ENCODE measurements at regions of chr9 and their contacts with region 1.

Region 1: GRCh38 chr9:107489687-107490605 is at the start of gene KLF4:
- DNase-seq: peak; percentile 91
- H3K4me3 ChIP-seq: peak within 1 kb of the TSS; percentile 93 to 97 (median 94)
- H3K27ac ChIP-seq: peak within 1 kb of the TSS; percentile 83
- H3K4me1 ChIP-seq: peaks cover 39% of the 10 kb centered on the region
- H3K27me3 ChIP-seq: no peaks in the 10 kb centered on the region
- CTCF ChIP-seq: no peak
- total RNA-seq, gene KLF4: 20.5 to 52.5 TPM

Region 2: DNA sequence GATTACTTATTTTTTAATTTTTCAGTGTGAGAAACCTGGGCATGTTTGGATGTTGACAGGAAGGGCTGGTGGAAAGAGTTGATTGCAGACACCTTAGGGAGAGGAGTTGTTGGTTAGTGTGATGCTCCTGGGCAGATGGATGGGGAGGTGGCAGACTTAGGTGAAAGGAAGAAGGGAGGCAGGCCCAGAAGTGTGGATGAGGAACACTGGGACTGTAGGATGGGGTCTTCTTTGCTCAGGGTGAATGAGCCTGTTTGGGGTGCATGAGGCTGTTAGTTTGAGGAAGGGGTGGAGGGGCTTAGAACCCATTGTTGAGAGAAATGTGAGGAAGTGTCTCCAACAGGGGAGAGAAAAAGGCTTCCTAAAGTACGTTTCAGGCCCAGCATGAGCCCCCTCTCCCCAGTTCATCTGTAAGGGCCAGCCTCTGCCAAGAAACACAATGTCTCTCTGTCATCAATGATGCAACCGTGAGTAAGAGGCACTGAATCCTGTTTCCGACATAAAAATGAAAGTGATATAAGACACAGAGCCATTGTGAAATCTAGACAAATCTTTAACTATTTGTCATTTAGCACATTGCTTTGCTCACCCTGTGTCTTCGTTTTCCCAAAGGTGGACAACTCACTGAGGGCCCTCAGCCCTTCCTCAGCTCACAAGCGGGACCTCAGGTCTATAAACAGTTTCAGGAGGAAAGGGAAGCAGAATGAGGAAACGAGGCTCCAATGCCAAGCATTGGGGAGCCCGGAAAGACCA is 58.3 kb after region 1 on chr9:
- CTCF ChIA-PET with region 1: no interaction called
- dilution Hi-C with region 1: no loop called
- in situ Hi-C with region 1: no loop called
- intact Hi-C with region 1: loop called (anchors 5 kb)
- DNase-seq: peak; percentile 86
- H3K4me3 ChIP-seq: no peak overlapping the region
- H3K27ac ChIP-seq: peak overlapping the region; percentile 26
- H3K4me1 ChIP-seq: peaks cover 16% of the 10 kb centered on the region
- H3K27me3 ChIP-seq: no peaks in the 10 kb centered on the region
- CTCF ChIP-seq: no peak

Region 3: DNA sequence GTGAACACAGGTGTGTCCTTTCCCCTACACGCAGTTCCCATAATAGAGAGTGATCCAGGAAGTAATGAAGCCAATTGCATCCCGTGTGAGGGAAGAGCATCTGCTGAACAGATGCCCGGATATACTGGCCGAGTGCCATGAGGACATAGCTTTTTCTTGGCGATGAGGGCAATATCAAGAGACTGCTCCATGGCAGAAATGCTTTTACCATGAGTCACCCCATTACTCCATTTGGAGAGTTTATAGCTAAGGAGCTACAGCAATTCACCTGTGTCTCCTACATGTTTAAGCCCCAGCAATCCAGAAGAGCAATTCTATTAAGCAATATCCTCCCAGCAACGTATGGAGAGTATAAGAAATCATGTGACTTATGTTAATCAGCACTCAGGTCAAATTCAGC is 221.6 kb after region 1 on chr9:
- CTCF ChIA-PET with region 1: no interaction called
- dilution Hi-C with region 1: no loop called
- in situ Hi-C with region 1: no loop called
- intact Hi-C with region 1: loop called (anchors 5 kb)
- DNase-seq: peak; percentile 88
- H3K4me3 ChIP-seq: no peak overlapping the region
- H3K27ac ChIP-seq: peak overlapping the region; percentile 75
- H3K4me1 ChIP-seq: peaks cover 53% of the 10 kb centered on the region
- H3K27me3 ChIP-seq: no peaks in the 10 kb centered on the region
- CTCF ChIP-seq: no peak

Region 4: GRCh38 chr9:107721705-107722245 is 231.8 kb after region 1 on chr9:
- CTCF ChIA-PET with region 1: no interaction called
- dilution Hi-C with region 1: no loop called
- in situ Hi-C with region 1: no loop called
- intact Hi-C with region 1: no loop called
- DNase-seq: peak; percentile 48
- H3K4me3 ChIP-seq: no peak overlapping the region
- H3K27ac ChIP-seq: no peak overlapping the region
- H3K4me1 ChIP-seq: peaks cover 7% of the 10 kb centered on the region
- H3K27me3 ChIP-seq: no peaks in the 10 kb centered on the region
- CTCF ChIP-seq: no peak

Region 5: GRCh38 chr9:107847978-107848964 is 358.3 kb after region 1 on chr9:
- CTCF ChIA-PET with region 1: no interaction called
- dilution Hi-C with region 1: no loop called
- in situ Hi-C with region 1: no loop called
- intact Hi-C with region 1: loop called (anchors 10 kb)
- DNase-seq: peak; percentile 41
- H3K4me3 ChIP-seq: no peak overlapping the region
- H3K27ac ChIP-seq: no peak overlapping the region
- H3K4me1 ChIP-seq: peaks cover 12% of the 10 kb centered on the region
- H3K27me3 ChIP-seq: no peaks in the 10 kb centered on the region
- CTCF ChIP-seq: no peak

Region 6: GRCh38 chr9:108182950-108183381 is 693.0 kb after region 1 on chr9:
- CTCF ChIA-PET with region 1: no interaction called
- dilution Hi-C with region 1: no loop called
- in situ Hi-C with region 1: no loop called
- intact Hi-C with region 1: loop called (anchors 5 kb)
- DNase-seq: peak; percentile 56
- H3K4me3 ChIP-seq: no peak overlapping the region
- H3K27ac ChIP-seq: no peak overlapping the region
- H3K4me1 ChIP-seq: peaks cover 27% of the 10 kb centered on the region
- H3K27me3 ChIP-seq: no peaks in the 10 kb centered on the region
- CTCF ChIP-seq: no peak

Measured in mammary epithelial cell (primary cell).